AG04450 (cell line): ENCODE measurements at regions of chr11 and their contacts with region 1.

Region 1: GRCh38 chr11:10181811-10182210 is 112.2 kb downstream of the SBF2 start:
- DNase-seq: no peak
- H3K4me3 ChIP-seq: no peak overlapping the region
- H3K27ac ChIP-seq: no peak overlapping the region
- H3K27me3 ChIP-seq: no peaks in the 10 kb centered on the region
- CTCF ChIP-seq: peak; percentile 19; the same call in 1 of the 2 replicates

Region 2: GRCh38 chr11:10044618-10045017 is 137.2 kb before region 1 on chr11:
- CTCF ChIA-PET with region 1: no interaction called
- POLR2A ChIA-PET with region 1: no interaction called
- DNase-seq: no peak
- H3K4me3 ChIP-seq: no peak overlapping the region
- H3K27ac ChIP-seq: no peak overlapping the region
- H3K27me3 ChIP-seq: no peaks in the 10 kb centered on the region
- CTCF ChIP-seq: no peak

Region 3: DNA sequence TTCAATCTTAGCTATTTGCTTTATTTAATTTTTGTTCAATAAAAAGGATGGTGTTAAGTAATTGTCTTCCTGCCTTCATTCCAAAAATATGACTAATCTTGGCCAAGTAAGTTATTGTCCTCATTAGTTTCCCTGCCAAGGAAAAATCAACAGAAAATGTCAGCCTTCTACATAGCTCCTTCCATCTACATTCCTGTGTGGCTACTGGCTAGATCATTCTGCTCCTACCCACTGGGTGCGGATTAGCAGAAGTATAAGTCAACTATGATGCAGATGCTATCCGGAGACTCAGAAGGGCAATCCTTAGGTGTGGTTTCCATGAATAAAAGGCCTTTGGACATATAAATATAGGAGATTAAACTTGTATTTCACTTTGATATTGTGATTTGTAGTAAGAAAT is 42.2 kb before region 1 on chr11:
- CTCF ChIA-PET with region 1: no interaction called
- POLR2A ChIA-PET with region 1: no interaction called
- DNase-seq: no peak
- H3K4me3 ChIP-seq: no peak overlapping the region
- H3K27ac ChIP-seq: no peak overlapping the region
- H3K27me3 ChIP-seq: no peaks in the 10 kb centered on the region
- CTCF ChIP-seq: no peak

Region 4: GRCh38 chr11:10164621-10165020 is 17.2 kb before region 1 on chr11:
- CTCF ChIA-PET with region 1: interaction called, 11 read pairs
- POLR2A ChIA-PET with region 1: no interaction called
- DNase-seq: no peak
- H3K4me3 ChIP-seq: no peak overlapping the region
- H3K27ac ChIP-seq: no peak overlapping the region
- H3K27me3 ChIP-seq: no peaks in the 10 kb centered on the region
- CTCF ChIP-seq: no peak